Activated CD8-positive, alpha-beta T cell treated with anti-CD3 and anti-CD28 coated beads for 36 hours (primary cell): ENCODE measurements at regions of chr3 and their contacts with region 1.

Region 1: GRCh38 chr3:111978493-111979433 is at the start of gene ABHD10:
- DNase-seq: peak; percentile 98
- ATAC-seq: peak; percentile 94
- H3K4me3 Mint-ChIP-seq: peak within 1 kb of the TSS; percentile 92
- H3K27ac Mint-ChIP-seq: peak within 1 kb of the TSS; percentile 92
- H3K4me1 Mint-ChIP-seq: peaks cover 37% of the 10 kb centered on the region
- H3K27me3 Mint-ChIP-seq: no peaks in the 10 kb centered on the region
- CTCF ChIP-seq: no peak
- total RNA-seq, gene ABHD10: 59.4 to 66.5 TPM

Region 2: GRCh38 chr3:111989061-111989678 is 10.4 kb after region 1 on chr3:
- CTCF ChIA-PET with region 1: interaction called, 31 read pairs
- POLR2A ChIA-PET with region 1: interaction called, 10 read pairs
- intact Hi-C with region 1: no loop called
- DNase-seq: no peak
- ATAC-seq: peak; percentile 68
- H3K4me3 Mint-ChIP-seq: no peak overlapping the region
- H3K27ac Mint-ChIP-seq: peak overlapping the region; percentile 28
- H3K4me1 Mint-ChIP-seq: peaks cover 34% of the 10 kb centered on the region
- H3K27me3 Mint-ChIP-seq: no peaks in the 10 kb centered on the region
- CTCF ChIP-seq: peak; percentile 71

Region 3: GRCh38 chr3:111998636-111999483 is 20.1 kb after region 1 on chr3 and contains the start of gene TAGLN3:
- CTCF ChIA-PET with region 1: interaction called, 4 read pairs
- POLR2A ChIA-PET with region 1: interaction called, 15 read pairs
- intact Hi-C with region 1: no loop called
- DNase-seq: peak; percentile 32
- ATAC-seq: no peak
- H3K4me3 Mint-ChIP-seq: peak within 1 kb of the TSS; percentile 61
- H3K27ac Mint-ChIP-seq: no peak within 1 kb of the TSS
- H3K4me1 Mint-ChIP-seq: peaks cover 35% of the 10 kb centered on the region
- H3K27me3 Mint-ChIP-seq: no peaks in the 10 kb centered on the region
- CTCF ChIP-seq: no peak
- total RNA-seq, gene TAGLN3: 0.89 to 1.2 TPM

Region 4: DNA sequence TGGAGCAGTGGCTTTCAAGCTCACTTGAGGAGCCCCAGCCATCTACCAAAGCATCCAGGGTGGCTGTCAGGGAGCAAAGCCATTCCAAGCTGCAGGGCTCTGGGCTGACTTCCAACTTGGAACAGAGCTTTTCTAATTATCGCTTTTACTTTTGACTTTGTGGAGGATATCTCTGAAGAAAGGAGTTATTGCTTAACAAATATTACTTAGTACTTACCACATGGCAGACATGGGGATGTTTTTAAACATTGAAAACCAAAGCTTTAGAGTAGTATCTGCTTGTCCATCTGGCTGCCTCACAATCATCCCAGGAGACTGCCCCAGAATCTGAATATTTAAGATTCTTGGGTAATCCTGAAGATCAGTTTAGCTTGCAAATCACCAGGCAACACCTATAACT is 28.9 kb after region 1 on chr3:
- CTCF ChIA-PET with region 1: interaction called, 98 read pairs
- POLR2A ChIA-PET with region 1: interaction called, 15 read pairs
- intact Hi-C with region 1: no loop called
- DNase-seq: no peak
- ATAC-seq: no peak
- H3K4me3 Mint-ChIP-seq: no peak overlapping the region
- H3K27ac Mint-ChIP-seq: no peak overlapping the region
- H3K4me1 Mint-ChIP-seq: peaks cover 30% of the 10 kb centered on the region
- H3K27me3 Mint-ChIP-seq: no peaks in the 10 kb centered on the region
- CTCF ChIP-seq: no peak

Region 5: DNA sequence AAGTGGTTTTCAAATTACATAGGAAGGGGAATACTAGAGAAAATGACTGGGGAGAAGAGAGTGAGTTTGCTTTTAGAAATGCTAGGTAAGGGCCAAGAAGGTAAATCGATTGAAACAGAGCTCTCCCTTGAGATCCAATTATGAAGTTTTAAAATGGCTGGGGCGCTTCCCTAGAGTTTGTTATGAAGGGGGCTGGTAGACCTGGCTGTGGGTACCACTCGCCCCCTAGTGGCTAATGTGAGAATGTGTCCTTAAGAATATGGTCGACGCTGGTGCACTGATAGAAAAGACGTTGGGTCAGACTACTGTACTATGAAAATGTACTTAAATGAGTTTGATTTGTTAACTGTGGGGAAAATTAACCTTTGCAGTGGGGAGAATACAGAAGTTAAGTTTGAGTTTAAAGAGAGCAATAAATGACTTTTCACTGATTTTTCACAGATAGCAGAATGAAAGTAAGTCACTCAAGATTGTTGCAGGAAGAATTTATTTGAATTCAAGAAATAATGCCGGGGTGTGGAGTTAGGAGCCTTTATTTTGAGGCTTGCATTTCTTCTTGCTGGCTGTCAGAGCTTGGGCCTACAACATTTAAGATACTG is 64.9 kb after region 1 on chr3:
- CTCF ChIA-PET with region 1: interaction called, 18 read pairs
- POLR2A ChIA-PET with region 1: interaction called, 3 read pairs
- intact Hi-C with region 1: no loop called
- DNase-seq: peak; percentile 70
- ATAC-seq: peak; percentile 99
- H3K4me3 Mint-ChIP-seq: no peak overlapping the region
- H3K27ac Mint-ChIP-seq: no peak overlapping the region
- H3K4me1 Mint-ChIP-seq: peaks cover 2% of the 10 kb centered on the region
- H3K27me3 Mint-ChIP-seq: no peaks in the 10 kb centered on the region
- CTCF ChIP-seq: peak; percentile 89

Region 6: DNA sequence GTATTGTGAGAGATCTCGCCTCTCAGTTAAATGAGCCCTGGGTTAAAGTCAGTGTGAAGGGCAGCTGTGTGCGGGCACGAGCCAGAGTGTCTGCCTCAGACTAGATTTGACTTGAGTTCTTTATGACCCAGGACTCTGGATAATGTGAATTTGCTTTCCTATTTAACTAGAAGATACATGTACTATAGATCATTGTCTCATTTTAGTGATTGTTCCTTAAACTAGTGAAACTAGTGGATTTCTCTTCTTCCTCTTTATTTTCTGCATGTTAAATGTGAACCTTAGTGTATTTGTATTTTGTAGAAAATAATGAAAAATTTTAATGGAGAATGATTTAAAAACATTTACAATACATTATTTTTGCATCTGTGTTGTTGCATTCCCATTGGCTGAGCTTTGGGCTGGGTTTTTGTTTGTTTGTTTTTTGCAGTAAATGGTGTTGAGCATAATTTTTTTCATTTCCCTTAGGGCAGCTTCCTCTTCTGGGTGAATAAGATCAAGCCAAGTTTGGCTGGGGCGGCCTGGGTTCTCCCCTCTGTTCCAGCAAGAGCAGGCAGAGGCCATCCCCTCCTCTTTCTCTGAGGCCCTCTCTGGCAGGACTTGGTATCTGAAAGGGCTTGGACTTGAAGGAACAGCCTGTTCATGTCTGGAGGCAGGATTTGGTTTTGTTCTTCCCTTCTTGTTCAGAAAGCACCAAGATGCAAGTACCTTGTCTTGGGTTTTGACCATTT is 139.2 kb after region 1 on chr3:
- CTCF ChIA-PET with region 1: no interaction called
- POLR2A ChIA-PET with region 1: no interaction called
- intact Hi-C with region 1: no loop called
- DNase-seq: no peak
- ATAC-seq: no peak
- H3K4me3 Mint-ChIP-seq: no peak overlapping the region
- H3K27ac Mint-ChIP-seq: no peak overlapping the region
- H3K4me1 Mint-ChIP-seq: peaks cover 40% of the 10 kb centered on the region
- H3K27me3 Mint-ChIP-seq: no peaks in the 10 kb centered on the region
- CTCF ChIP-seq: no peak